ENCODE measurements at regions of chr12 and their contacts with region 1.

Region 1: GRCh38 chr12:100154474-100155247 is 12.0 kb upstream of the BLTP3B start:
- DNase-seq: peak; percentile 72

Region 2: DNA sequence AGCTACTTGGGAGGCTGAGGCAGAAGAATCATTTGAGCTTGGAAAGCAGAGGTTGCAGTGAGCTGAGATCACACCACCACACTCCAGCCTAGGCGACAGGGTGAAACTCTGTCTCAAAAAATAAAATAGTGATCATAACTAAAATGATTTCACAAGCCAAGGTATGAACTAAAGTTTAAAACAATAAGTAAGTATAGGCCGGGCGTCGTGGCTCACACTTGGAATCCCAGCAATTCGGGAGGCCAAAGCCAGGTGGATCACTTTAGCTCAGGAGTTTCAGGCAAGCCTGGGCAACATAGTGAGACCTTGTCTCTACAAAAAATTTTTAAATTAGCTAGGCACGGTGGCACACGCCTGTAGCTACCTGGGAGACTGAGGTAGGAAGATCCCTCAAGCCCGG is 39.4 kb before region 1 on chr12:
- CTCF ChIA-PET with region 1: no interaction called
- POLR2A ChIA-PET with region 1: no interaction called
- DNase-seq: no peak

Region 3: GRCh38 chr12:100142851-100143559 is 11.7 kb before region 1 on chr12 and contains the start of gene BLTP3B:
- CTCF ChIA-PET with region 1: interaction called, 11 read pairs
- POLR2A ChIA-PET with region 1: no interaction called
- DNase-seq: peak; percentile 91